ENCODE measurements at regions of chr18 and their contacts with region 1.

Region 1: DNA sequence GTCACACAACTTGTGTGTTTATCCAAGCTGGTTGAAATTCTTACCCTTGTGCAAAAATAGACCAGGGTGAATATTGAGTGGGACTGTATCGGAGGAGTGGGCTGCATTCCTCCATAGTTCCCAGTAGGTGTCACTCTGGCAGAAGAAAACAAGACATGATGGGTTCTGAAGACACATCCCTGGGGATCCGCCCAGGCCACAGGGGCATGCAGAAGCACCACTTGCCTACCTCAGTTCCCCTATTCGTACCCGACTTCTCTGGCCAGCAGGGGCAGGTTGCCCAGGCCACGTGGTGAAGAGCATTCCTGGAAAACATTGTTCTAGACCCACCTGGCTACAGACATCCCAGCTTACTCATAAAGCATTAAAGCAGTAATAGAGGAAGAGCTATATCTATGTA is 168.2 kb downstream of the FAM210A start:
- DNase-seq: peak in 2 of 5 donors; percentile 10 to 16
- H3K4me3 ChIP-seq: no peak overlapping the region
- H3K4me3 Mint-ChIP-seq: peak overlapping the region in 1 of 8 donors; percentile 16
- H3K27ac ChIP-seq: no peak overlapping the region
- H3K27ac Mint-ChIP-seq: peak overlapping the region in 2 of 7 donors; percentile 10 to 58
- H3K4me1 ChIP-seq: peaks cover 10% of the 10 kb centered on the region
- H3K4me1 Mint-ChIP-seq: peaks cover 16 to 20% (median 18%) of the 10 kb centered on the region in 4 donors
- H3K27me3 ChIP-seq: no peaks in the 10 kb centered on the region
- H3K27me3 Mint-ChIP-seq: no peaks in the 10 kb centered on the region

Region 2: GRCh38 chr18:13611601-13612195 is 53.6 kb after region 1 on chr18:
- CTCF ChIA-PET with region 1: interaction called, 13 read pairs
- POLR2A ChIA-PET with region 1: interaction called, 3 read pairs
- intact Hi-C with region 1: loop called (anchors 5 kb)
- DNase-seq: no peak
- H3K4me3 ChIP-seq: peak overlapping the region; percentile 34 to 51
- H3K4me3 Mint-ChIP-seq: peak overlapping the region; percentile 78 to 96 (median 88)
- H3K27ac ChIP-seq: peak overlapping the region; percentile 11
- H3K27ac Mint-ChIP-seq: peak overlapping the region; percentile 83 to 96 (median 91)
- H3K4me1 ChIP-seq: peaks cover 81% of the 10 kb centered on the region
- H3K4me1 Mint-ChIP-seq: peaks cover 68 to 85% (median 76%) of the 10 kb centered on the region in 4 donors
- H3K27me3 ChIP-seq: no peaks in the 10 kb centered on the region
- H3K27me3 Mint-ChIP-seq: no peaks in the 10 kb centered on the region

Region 3: GRCh38 chr18:13629841-13630715 is 72.0 kb after region 1 on chr18:
- CTCF ChIA-PET with region 1: interaction called, 15 read pairs
- POLR2A ChIA-PET with region 1: no interaction called
- intact Hi-C with region 1: loop called (anchors 1 kb)
- DNase-seq: peak in 4 of 5 donors; percentile 44 to 51 (median 46)
- H3K4me3 ChIP-seq: no peak overlapping the region
- H3K4me3 Mint-ChIP-seq: peak overlapping the region in 1 of 8 donors; percentile 16
- H3K27ac ChIP-seq: no peak overlapping the region
- H3K27ac Mint-ChIP-seq: peak overlapping the region in 6 of 7 donors; percentile 13 to 76 (median 64)
- H3K4me1 ChIP-seq: no peaks in the 10 kb centered on the region
- H3K4me1 Mint-ChIP-seq: peaks cover 9 to 14% (median 13%) of the 10 kb centered on the region in 4 donors
- H3K27me3 ChIP-seq: no peaks in the 10 kb centered on the region
- H3K27me3 Mint-ChIP-seq: no peaks in the 10 kb centered on the region

Region 4: GRCh38 chr18:13726232-13726971 is 168.3 kb after region 1 on chr18 and contains the starts of genes FAM210A and RNMT:
- CTCF ChIA-PET with region 1: interaction called, 3 read pairs
- POLR2A ChIA-PET with region 1: no interaction called
- intact Hi-C with region 1: loop called (anchors 1 kb)
- DNase-seq: peak; percentile 90 to 95 (median 92)
- H3K4me3 ChIP-seq: peak within 1 kb of the TSS; percentile 76 to 78
- H3K4me3 Mint-ChIP-seq: peak within 1 kb of the TSS; percentile 87 to 97 (median 92)
- H3K27ac ChIP-seq: peak within 1 kb of the TSS; percentile 96
- H3K27ac Mint-ChIP-seq: peak within 1 kb of the TSS; percentile 85 to 98 (median 97)
- H3K4me1 ChIP-seq: peaks cover 49% of the 10 kb centered on the region
- H3K4me1 Mint-ChIP-seq: peaks cover 41 to 67% (median 51%) of the 10 kb centered on the region in 4 donors
- H3K27me3 ChIP-seq: no peaks in the 10 kb centered on the region
- H3K27me3 Mint-ChIP-seq: no peaks in the 10 kb centered on the region
- total RNA-seq, gene FAM210A: 9.4 to 10.2 TPM
- total RNA-seq, gene RNMT: 53.7 to 55.0 TPM

Region 5: DNA sequence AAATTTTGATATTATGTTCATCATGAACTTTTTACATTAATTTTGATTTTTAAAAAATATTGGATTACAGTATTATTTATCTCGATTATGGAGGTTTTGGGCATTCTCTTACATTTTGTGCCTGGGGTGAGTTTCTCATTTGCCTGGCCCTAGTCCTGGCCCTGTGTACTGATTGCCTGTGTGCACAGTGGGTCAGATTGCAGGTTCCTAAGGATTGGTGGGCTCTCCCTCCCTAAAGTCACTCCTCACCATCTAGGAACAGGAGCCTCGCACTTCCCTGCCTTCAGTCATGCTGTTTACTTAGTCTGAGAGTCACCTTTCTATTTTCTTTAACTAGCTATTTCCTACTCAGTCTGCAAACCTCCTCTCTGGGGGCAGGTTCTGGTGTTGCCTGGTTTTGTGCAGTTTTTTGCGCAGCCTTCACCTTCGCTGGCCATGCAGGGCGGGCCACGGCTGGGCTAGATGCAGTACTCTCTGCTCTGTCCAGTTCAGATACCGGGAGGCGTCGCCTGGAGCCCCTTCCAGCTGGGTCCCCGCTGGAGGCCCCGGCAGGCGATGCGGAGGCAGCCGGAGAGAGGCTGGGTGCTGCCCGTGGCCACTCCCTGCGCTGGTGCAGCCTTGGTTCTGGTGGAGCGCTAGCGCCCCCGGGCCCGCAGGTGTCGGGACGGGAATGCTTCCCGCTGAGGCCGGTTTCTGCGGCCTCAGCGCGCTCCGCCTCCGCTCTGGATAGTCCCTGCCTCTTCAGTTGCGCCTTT is 242.6 kb after region 1 on chr18:
- CTCF ChIA-PET with region 1: no interaction called
- POLR2A ChIA-PET with region 1: no interaction called
- intact Hi-C with region 1: loop called (anchors 5 kb)
- DNase-seq: peak in 3 of 5 donors; percentile 23 to 25 (median 24)
- H3K4me3 ChIP-seq: no peak overlapping the region
- H3K4me3 Mint-ChIP-seq: peak overlapping the region in 7 of 8 donors; percentile 41 to 84 (median 50)
- H3K27ac ChIP-seq: no peak overlapping the region
- H3K27ac Mint-ChIP-seq: no peak overlapping the region
- H3K4me1 ChIP-seq: peaks cover 7% of the 10 kb centered on the region
- H3K4me1 Mint-ChIP-seq: peaks cover 3 to 6% (median 5%) of the 10 kb centered on the region in 4 donors
- H3K27me3 ChIP-seq: peaks cover 13% of the 10 kb centered on the region
- H3K27me3 Mint-ChIP-seq: peaks cover 45 to 48% of the 10 kb centered on the region in 2 donors

Region 6: DNA sequence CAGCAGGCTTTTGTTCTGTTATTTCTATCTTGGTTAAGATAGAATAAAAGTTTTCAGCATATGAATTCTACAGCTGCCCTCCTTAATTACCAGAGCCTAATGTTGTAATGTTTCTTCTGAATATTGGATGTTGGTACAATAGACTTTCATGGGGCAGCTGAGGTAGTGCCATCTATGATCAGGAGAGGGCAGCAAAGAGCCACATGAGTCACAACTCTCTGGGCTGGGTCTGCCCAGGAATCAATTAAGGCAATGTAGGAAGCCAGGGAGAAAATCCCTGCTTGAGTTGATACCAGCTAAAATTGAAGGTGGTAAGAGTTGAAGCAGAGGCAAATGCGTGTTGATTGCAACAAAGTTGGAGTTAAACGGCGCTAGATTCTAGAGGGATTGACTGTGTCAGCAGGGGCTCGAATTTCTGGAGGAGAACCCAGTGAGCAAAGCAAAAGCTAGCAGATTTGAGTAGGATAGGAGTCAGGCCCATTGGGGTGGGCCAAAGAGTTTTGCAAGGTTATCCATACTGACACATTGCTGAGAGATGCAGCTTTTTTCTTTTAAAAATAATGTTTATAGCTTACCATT is 255.2 kb after region 1 on chr18:
- CTCF ChIA-PET with region 1: interaction called, 13 read pairs
- POLR2A ChIA-PET with region 1: no interaction called
- intact Hi-C with region 1: no loop called
- DNase-seq: peak in 4 of 5 donors; percentile 30 to 45 (median 32)
- H3K4me3 ChIP-seq: no peak overlapping the region
- H3K4me3 Mint-ChIP-seq: no peak overlapping the region
- H3K27ac ChIP-seq: no peak overlapping the region
- H3K27ac Mint-ChIP-seq: no peak overlapping the region
- H3K4me1 ChIP-seq: no peaks in the 10 kb centered on the region
- H3K4me1 Mint-ChIP-seq: peaks cover 0 to 2% (median under 1%) of the 10 kb centered on the region in 4 donors
- H3K27me3 ChIP-seq: no peaks in the 10 kb centered on the region
- H3K27me3 Mint-ChIP-seq: peaks cover 5 to 8% of the 10 kb centered on the region in 2 donors